MCF 10A (cell line): ENCODE measurements at regions of chr9 and their contacts with region 1.

Region 1: GRCh38 chr9:128322404-128323211 is at the starts of genes COQ4 and TRUB2:
- DNase-seq: peak; percentile 95
- H3K4me3 Mint-ChIP-seq: peak within 1 kb of the TSS; percentile 86
- H3K27ac Mint-ChIP-seq: peak within 1 kb of the TSS; percentile 95
- H3K4me1 Mint-ChIP-seq: peaks cover 8% of the 10 kb centered on the region
- H3K27me3 Mint-ChIP-seq: no peaks in the 10 kb centered on the region
- CTCF ChIP-seq: no peak
- total RNA-seq, gene COQ4: 57.1 and 58.9 TPM in 2 replicates
- total RNA-seq, gene TRUB2: 36.1 and 37.6 TPM in 2 replicates

Region 2: DNA sequence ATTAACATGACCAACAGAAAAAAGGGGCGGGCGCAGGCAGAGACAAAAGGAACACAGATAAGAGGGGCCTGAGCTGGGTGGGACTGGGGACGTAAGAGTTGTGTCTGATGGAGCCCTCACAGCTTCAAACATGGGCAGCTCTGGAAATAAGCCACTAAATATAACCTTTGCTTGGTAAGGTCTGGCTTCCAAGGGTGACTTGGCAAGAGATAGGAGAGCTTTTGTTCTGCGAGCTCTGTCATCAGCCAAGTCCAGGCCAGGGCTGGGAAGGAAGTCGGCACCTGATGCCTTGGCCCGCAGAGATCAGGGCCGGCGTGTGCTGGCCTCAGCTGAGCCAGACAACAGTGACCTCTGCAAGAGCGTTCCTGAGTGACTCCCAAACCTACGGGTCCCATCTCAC is 12.1 kb before region 1 on chr9:
- CTCF ChIA-PET with region 1: interaction called, 4 read pairs
- POLR2A ChIA-PET with region 1: interaction called, 14 read pairs
- intact Hi-C with region 1: loop called (anchors 2 kb)
- DNase-seq: no peak
- H3K4me3 Mint-ChIP-seq: no peak overlapping the region
- H3K27ac Mint-ChIP-seq: no peak overlapping the region
- H3K4me1 Mint-ChIP-seq: no peaks in the 10 kb centered on the region
- H3K27me3 Mint-ChIP-seq: no peaks in the 10 kb centered on the region
- CTCF ChIP-seq: no peak

Region 3: GRCh38 chr9:128339771-128340690 is 17.4 kb after region 1 on chr9 and contains the start of gene SLC27A4:
- CTCF ChIA-PET with region 1: interaction called, 16 read pairs
- POLR2A ChIA-PET with region 1: interaction called, 14 read pairs
- intact Hi-C with region 1: loop called (anchors 2 kb)
- DNase-seq: peak; percentile 91
- H3K4me3 Mint-ChIP-seq: peak within 1 kb of the TSS; percentile 92
- H3K27ac Mint-ChIP-seq: peak within 1 kb of the TSS; percentile 93
- H3K4me1 Mint-ChIP-seq: peaks cover 6% of the 10 kb centered on the region
- H3K27me3 Mint-ChIP-seq: no peaks in the 10 kb centered on the region
- CTCF ChIP-seq: no peak
- total RNA-seq, gene SLC27A4: 17.0 and 18.8 TPM in 2 replicates

Region 4: DNA sequence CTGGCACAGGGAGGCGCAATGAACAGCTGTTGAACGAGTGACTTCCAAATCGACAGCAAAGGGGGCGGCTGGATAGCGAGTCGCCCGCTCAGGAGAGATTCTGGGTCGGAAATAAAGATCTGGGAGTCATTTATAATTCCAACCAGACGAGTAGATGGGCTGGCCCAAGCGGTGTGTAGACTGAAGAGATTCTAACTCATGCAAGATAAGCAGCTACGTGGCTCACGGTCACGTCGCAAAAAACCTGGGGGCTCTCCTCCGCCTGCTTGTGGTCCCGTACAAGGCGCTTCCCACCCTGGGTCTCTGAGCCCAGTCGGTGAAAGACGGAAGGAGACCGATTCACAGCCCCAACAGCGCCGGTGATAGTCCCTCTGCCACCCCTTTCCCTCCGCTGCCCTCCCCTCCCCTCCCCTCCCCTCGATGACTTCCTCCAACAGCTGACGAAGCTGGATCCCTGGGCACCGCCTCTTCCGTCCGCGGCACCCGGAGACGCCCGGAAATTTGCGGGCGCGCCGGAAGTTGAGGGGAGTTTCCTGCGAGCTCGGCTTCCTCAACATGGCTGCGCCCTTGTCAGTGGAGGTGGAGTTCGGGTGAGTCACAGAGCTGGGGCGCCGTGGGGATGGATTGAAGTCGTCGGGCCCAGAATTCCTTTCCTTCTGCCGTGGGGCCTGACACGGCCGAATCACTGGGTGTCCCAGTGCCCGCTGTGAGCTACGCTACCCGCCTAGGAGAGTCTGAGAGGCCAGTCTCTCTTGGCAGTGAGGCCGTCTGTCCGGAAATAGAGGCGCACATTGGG is 48.4 kb after region 1 on chr9 and contains the start of gene URM1:
- CTCF ChIA-PET with region 1: interaction called, 4 read pairs
- POLR2A ChIA-PET with region 1: interaction called, 15 read pairs
- intact Hi-C with region 1: no loop called
- DNase-seq: peak; percentile 96
- H3K4me3 Mint-ChIP-seq: peak within 1 kb of the TSS; percentile 84
- H3K27ac Mint-ChIP-seq: peak within 1 kb of the TSS; percentile 84
- H3K4me1 Mint-ChIP-seq: peaks cover 34% of the 10 kb centered on the region
- H3K27me3 Mint-ChIP-seq: no peaks in the 10 kb centered on the region
- CTCF ChIP-seq: no peak
- total RNA-seq, gene URM1: 56.8 and 57.7 TPM in 2 replicates